Cardiac septum (tissue), 1 donor: ENCODE measurements at regions of chr5 and their contacts with region 1.

Region 1: DNA sequence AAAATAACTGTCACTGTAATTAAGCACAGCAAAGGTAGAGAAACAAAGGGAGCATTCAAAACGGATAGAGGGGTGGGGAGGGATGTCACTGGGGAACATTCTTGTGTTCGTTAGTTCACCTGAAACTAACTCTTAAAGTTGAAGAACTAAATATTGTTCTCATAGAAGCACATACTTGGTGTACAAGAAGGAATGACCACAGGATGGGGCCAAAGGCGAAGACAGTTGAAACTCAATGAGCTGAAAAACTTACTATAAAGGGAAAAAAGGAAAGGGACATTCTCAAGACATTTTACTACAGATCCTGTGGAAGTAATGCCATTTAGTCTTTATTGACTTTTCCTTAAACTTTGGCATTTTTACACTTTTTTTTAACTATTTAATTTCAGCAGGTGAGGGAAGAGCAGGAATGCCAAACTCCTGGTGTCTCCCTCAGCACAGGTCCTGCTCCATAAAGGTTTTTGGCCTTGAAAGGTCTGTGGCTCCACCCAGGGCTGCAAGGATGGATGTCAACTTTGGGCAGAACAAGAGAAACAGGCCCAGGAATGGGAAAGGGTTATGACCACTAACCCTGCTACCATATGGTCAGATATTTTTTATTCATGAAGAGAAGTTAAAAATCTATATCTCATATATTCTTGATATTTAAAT is 197.6 kb upstream of the RASA1 start:
- DNase-seq: no peak

Region 2: GRCh38 chr5:87394411-87395165 is 324.5 kb after region 1 on chr5:
- intact Hi-C with region 1: loop called (anchors 5 kb)
- DNase-seq: no peak

Region 3: DNA sequence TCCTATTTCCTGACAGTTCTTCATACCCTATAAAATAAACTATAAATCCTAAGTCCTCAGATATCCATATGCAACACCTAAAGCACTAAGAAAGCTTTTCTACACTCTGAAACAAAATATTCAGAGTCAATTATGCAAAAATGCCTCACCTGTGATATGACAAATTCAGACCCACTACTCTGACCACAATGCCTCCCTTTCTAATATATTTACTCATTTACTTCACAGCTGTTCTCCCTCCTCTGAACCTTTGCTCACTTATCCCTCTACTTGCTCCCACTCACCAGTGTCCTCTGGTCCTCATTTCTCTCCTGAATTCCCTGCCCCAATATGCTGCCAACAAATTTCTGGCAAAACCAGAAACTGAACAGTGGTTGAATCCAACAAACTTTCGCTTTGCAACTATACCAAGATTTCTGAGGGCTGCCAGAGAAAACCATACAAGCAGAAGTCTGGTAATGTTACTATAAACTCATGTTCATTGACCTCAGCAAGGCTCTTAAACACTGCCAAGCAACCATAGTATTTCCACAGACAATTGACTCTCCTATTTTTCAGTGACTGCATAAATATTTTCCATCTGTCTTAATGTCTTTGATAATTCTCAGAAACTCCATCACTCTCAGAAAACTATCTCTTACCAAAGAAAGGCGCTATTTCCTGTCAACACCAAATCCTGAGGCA is 335.5 kb after region 1 on chr5:
- intact Hi-C with region 1: no loop called
- DNase-seq: no peak